IMR-90 (cell line): ENCODE measurements at regions of chr16 and their contacts with region 1.

Region 1: DNA sequence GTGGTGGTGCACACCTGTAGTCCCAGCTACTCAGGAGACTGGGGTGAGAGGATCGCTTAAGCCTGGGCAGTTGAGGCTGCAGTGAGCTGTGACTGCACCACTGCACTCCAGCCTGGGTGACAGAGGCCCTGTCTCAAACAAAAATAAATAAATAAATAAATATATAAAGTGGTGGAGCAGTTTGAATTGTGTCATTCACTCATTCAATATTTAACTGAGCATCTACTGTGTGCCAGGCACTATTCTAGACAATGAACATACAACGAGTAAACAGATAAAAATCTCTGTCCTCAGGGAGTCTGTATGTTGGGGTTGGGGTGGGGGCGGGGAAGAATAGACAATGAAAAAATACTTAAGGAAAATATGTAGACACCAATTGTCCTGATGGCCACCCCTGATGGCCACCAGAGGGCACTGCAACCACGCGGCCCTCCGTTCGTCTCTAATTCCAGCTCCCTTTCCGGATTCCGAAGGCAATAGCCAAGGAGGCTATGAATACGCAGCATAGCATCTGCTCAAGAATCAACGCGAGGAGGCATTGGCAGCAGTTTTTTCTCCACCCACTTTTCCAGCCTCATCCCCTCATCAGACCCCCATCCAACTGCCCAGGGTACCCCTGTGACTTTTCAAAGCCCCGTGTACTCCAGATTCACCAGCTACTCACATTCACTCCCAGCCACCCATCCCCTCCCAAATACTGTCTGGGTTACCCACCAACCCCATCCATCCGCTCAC is 21.4 kb downstream of the QPRT start:
- DNase-seq: peak; percentile 87
- ATAC-seq: peak; percentile 99
- H3K4me3 ChIP-seq: no peak overlapping the region
- H3K27ac ChIP-seq: no peak overlapping the region
- H3K4me1 ChIP-seq: no peaks in the 10 kb centered on the region
- H3K27me3 ChIP-seq: peaks cover 10% of the 10 kb centered on the region; the same call in 1 of the 2 replicates
- CTCF ChIP-seq: peak; percentile 98
- POLR2A ChIP-seq: no peak
- RAD21 ChIP-seq: peak; percentile 97

Region 2: GRCh38 chr16:29720699-29721098 is 20.3 kb after region 1 on chr16:
- CTCF ChIA-PET with region 1: interaction called, 8 read pairs
- POLR2A ChIA-PET with region 1: no interaction called
- dilution Hi-C with region 1: no loop called
- in situ Hi-C with region 1: no loop called
- intact Hi-C with region 1: loop called (anchors 1 kb)
- DNase-seq: no peak
- ATAC-seq: no peak
- H3K4me3 ChIP-seq: no peak overlapping the region
- H3K27ac ChIP-seq: no peak overlapping the region
- H3K4me1 ChIP-seq: no peaks in the 10 kb centered on the region
- H3K27me3 ChIP-seq: peaks cover 4% of the 10 kb centered on the region
- CTCF ChIP-seq: no peak
- POLR2A ChIP-seq: no peak
- RAD21 ChIP-seq: no peak

Region 3: GRCh38 chr16:29790183-29790952 is 89.9 kb after region 1 on chr16 and contains the start of gene KIF22:
- CTCF ChIA-PET with region 1: no interaction called
- POLR2A ChIA-PET with region 1: no interaction called
- dilution Hi-C with region 1: no loop called
- in situ Hi-C with region 1: no loop called
- intact Hi-C with region 1: loop called (anchors 2 kb)
- DNase-seq: peak; percentile 98
- ATAC-seq: peak; percentile 96
- H3K4me3 ChIP-seq: peak within 1 kb of the TSS; percentile 77
- H3K27ac ChIP-seq: peak within 1 kb of the TSS; percentile 77
- H3K4me1 ChIP-seq: peaks cover 3% of the 10 kb centered on the region
- H3K27me3 ChIP-seq: no peaks in the 10 kb centered on the region
- CTCF ChIP-seq: peak; percentile 80
- POLR2A ChIP-seq: peak; percentile 52; the same call in 1 of the 2 replicates
- RAD21 ChIP-seq: peak; percentile 62
- total RNA-seq, gene KIF22: 40.8 and 43.0 TPM in 2 replicates

Region 4: DNA sequence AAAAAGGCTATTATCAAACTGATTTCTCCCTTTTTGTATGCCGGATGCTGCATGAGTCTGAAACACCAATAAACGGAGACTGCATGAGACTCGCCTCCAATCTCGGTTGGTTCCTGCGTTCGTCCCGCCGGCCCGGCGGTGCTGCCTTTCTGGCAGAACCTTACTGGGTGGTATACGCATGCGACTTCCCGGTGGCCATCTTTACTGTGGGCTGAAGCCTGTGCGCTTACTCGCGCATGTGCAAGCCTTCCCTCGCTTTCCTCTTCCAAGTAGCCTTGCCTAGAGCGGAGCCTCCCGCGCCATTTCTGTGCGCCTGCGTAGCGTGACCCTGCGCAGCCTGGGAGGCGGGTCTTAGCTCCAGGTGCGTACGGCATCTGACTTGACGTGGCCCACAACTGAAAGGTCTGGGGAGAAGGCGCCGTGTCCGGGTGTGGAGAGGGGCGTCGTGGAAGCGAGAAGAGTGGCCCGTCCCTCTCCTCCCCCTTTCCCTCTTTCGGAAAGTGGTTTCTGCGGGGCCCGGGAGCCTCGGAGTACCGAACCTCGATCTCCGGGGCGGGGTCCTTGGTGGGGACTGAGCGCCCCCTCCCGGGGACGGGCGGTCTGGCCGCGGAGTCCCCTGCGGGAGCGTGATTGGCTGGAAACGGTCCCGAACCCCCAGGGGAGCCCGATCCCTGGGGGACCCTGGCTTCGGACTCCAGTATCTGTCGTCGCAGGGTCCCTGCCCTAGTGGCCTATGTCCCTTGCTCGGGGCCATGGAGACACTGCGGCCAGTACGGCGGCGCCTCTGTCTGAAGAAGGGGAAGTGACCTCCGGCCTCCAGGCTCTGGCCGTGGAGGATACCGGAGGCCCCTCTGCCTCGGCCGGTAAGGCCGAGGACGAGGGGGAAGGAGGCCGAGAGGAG is 115.6 kb after region 1 on chr16 and contains the start of gene PAGR1:
- CTCF ChIA-PET with region 1: interaction called, 3 read pairs
- POLR2A ChIA-PET with region 1: no interaction called
- dilution Hi-C with region 1: no loop called
- in situ Hi-C with region 1: no loop called
- intact Hi-C with region 1: loop called (anchors 1 kb)
- DNase-seq: peak; percentile 100
- ATAC-seq: peak; percentile 68
- H3K4me3 ChIP-seq: peak within 1 kb of the TSS; percentile 62
- H3K27ac ChIP-seq: peak within 1 kb of the TSS; percentile 89
- H3K4me1 ChIP-seq: peaks cover 14% of the 10 kb centered on the region
- H3K27me3 ChIP-seq: no peaks in the 10 kb centered on the region
- CTCF ChIP-seq: peak; percentile 90
- POLR2A ChIP-seq: peak; percentile 49; the same call in 1 of the 2 replicates
- RAD21 ChIP-seq: peak; percentile 80
- total RNA-seq, gene PAGR1: 10.6 and 15.3 TPM in 2 replicates

Region 5: DNA sequence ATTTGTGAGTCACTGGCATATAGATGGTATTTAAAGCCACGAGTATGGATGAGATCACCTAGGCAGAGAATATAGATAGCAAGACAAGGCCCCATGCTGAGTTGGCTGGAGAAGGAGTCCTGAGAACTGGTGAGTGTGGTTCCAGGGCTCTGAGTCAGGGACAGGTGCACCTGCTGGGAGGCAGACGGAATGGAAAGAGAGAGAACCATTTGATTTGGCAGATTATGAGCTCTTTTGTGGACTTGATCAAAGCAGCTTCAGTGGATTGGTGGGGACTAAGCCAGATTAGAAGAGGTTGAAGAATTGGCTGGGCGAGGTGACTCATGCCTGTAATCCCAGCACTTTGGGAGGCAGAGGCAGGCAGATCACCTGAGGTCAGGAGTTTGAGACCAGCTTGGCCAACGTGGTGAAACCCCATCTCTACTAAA is 318.3 kb after region 1 on chr16:
- CTCF ChIA-PET with region 1: no interaction called
- POLR2A ChIA-PET with region 1: no interaction called
- dilution Hi-C with region 1: no loop called
- in situ Hi-C with region 1: loop called (anchors 10 kb)
- intact Hi-C with region 1: loop called (anchors 2 kb)
- DNase-seq: peak; percentile 40
- ATAC-seq: no peak
- H3K4me3 ChIP-seq: no peak overlapping the region
- H3K27ac ChIP-seq: no peak overlapping the region
- H3K4me1 ChIP-seq: no peaks in the 10 kb centered on the region
- H3K27me3 ChIP-seq: peaks cover 7% of the 10 kb centered on the region
- CTCF ChIP-seq: no peak
- POLR2A ChIP-seq: no peak
- RAD21 ChIP-seq: no peak

Region 6: GRCh38 chr16:31395647-31396046 is 1695.2 kb after region 1 on chr16:
- CTCF ChIA-PET with region 1: no interaction called
- POLR2A ChIA-PET with region 1: no interaction called
- dilution Hi-C with region 1: no loop called
- in situ Hi-C with region 1: no loop called
- intact Hi-C with region 1: no loop called
- DNase-seq: no peak
- ATAC-seq: no peak
- H3K4me3 ChIP-seq: no peak overlapping the region
- H3K27ac ChIP-seq: no peak overlapping the region
- H3K4me1 ChIP-seq: no peaks in the 10 kb centered on the region
- H3K27me3 ChIP-seq: no peaks in the 10 kb centered on the region; the same call in 1 of the 2 replicates
- CTCF ChIP-seq: no peak
- POLR2A ChIP-seq: no peak
- RAD21 ChIP-seq: no peak